ENCODE measurements at regions of chr9 and their contacts with region 1.

Region 1: GRCh38 chr9:124415102-124415851 is at the start of gene PSMB7:
- DNase-seq: peak; percentile 94
- H3K4me3 Mint-ChIP-seq: peak within 1 kb of the TSS; percentile 98
- H3K27ac Mint-ChIP-seq: peak within 1 kb of the TSS; percentile 94
- H3K4me1 Mint-ChIP-seq: peaks cover 37% of the 10 kb centered on the region
- H3K27me3 Mint-ChIP-seq: peaks cover 1% of the 10 kb centered on the region
- total RNA-seq, gene PSMB7: 206 and 220 TPM in 2 replicates

Region 2: GRCh38 chr9:123929870-123930831 is 485.1 kb before region 1 on chr9 and contains the start of gene DENND1A:
- intact Hi-C with region 1: loop called (anchors 2 kb)
- DNase-seq: peak; percentile 85
- H3K4me3 Mint-ChIP-seq: peak within 1 kb of the TSS; percentile 89
- H3K27ac Mint-ChIP-seq: peak within 1 kb of the TSS; percentile 92
- H3K4me1 Mint-ChIP-seq: peaks cover 29% of the 10 kb centered on the region
- H3K27me3 Mint-ChIP-seq: peaks cover 16% of the 10 kb centered on the region
- total RNA-seq, gene DENND1A: 18.5 and 22.8 TPM in 2 replicates

Region 3: GRCh38 chr9:124447297-124447661 is 32.0 kb after region 1 on chr9:
- intact Hi-C with region 1: loop called (anchors 1 kb)
- DNase-seq: no peak
- H3K4me3 Mint-ChIP-seq: no peak overlapping the region
- H3K27ac Mint-ChIP-seq: no peak overlapping the region
- H3K4me1 Mint-ChIP-seq: no peaks in the 10 kb centered on the region
- H3K27me3 Mint-ChIP-seq: peaks cover 21% of the 10 kb centered on the region

Region 4: DNA sequence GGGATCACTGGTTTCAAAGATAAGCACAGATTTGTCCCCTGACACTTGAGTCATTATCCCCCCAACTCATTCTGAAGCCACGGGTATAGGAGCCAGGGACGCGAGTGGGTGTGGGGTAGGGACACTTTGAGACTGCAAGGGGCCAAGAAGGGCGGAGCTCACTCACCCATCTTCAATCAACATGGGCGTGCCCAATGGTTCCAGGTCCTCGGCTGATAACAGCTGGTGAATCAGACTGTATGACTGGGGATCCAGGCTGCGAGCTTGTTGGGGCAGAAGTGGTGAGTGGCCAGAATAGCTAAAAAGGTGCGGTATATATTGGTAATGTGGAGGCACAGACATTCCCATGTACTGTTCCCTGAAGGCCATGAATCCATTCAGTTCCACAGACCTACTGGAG is 122.6 kb after region 1 on chr9:
- intact Hi-C with region 1: loop called (anchors 1 kb)
- DNase-seq: no peak
- H3K4me3 Mint-ChIP-seq: no peak overlapping the region
- H3K27ac Mint-ChIP-seq: no peak overlapping the region
- H3K4me1 Mint-ChIP-seq: no peaks in the 10 kb centered on the region
- H3K27me3 Mint-ChIP-seq: peaks cover 2% of the 10 kb centered on the region

Region 5: DNA sequence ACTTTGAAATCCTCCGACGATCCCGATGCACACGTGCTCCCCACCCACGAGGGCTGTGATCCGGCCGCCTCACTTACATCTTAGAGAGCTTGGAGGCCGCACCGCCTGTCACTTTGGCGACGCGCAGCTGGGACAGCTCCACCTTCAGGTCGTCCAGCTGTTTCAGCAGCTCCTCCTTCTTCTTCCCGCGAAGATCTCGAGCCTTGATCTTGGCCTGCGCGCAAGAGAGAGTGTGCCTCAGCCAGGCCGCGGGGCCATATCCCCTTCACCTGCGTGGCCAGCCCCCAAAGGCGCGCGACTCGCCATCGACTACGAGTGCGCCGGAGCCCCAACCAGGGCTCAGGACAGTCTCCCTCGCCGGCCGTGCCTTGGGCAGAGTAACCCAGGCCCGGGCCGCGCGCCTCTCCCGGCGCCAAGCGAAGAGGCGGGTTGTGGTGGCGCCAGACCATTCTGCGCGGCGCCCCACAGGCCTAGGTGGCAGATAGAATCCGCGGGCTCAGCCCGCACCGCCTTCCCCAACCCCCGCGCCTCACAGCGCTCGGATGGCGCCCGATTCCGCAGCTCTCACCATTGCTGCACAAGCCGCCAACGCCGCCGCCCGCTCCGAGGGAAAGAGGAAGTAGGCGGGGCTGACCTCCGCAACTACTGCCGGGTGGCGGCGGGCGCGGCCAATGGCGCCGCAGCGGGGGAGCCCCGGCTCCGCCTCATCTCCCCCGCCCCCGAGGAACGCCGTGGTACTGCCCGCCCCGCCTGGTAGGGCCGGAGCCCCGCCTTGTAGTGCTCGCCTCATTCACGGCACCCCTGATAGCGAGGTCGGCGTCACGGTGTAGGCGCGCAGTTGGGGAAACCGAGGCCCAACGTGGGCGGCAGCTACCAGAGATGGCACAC is 446.3 kb after region 1 on chr9 and contains the starts of genes ARPC5L and RPL35:
- intact Hi-C with region 1: loop called (anchors 1 kb)
- DNase-seq: peak; percentile 95
- H3K4me3 Mint-ChIP-seq: peak within 1 kb of the TSS; percentile 96
- H3K27ac Mint-ChIP-seq: peak within 1 kb of the TSS; percentile 98
- H3K4me1 Mint-ChIP-seq: peaks cover 35% of the 10 kb centered on the region
- H3K27me3 Mint-ChIP-seq: no peaks in the 10 kb centered on the region
- total RNA-seq, gene ARPC5L: 111 and 115 TPM in 2 replicates
- total RNA-seq, gene RPL35: 1,681 and 1,750 TPM in 2 replicates